BJ (cell line): ENCODE measurements at regions of chr16 and their contacts with region 1.

Region 1: GRCh38 chr16:85554112-85554813 is 58.9 kb upstream of the GSE1 start:
- DNase-seq: peak; percentile 37
- H3K4me3 ChIP-seq: peak overlapping the region; percentile 76
- H3K27me3 ChIP-seq: no peaks in the 10 kb centered on the region
- CTCF ChIP-seq: no peak

Region 2: GRCh38 chr16:85514595-85515318 is 39.5 kb before region 1 on chr16:
- CTCF ChIA-PET with region 1: interaction called, 12 read pairs
- POLR2A ChIA-PET with region 1: no interaction called
- DNase-seq: peak; percentile 78
- H3K4me3 ChIP-seq: 0 out of 2 replicates have a peak overlapping the region, but pooled peaks have one; percentile 11
- H3K27me3 ChIP-seq: no peaks in the 10 kb centered on the region
- CTCF ChIP-seq: peak; percentile 24; the same call in 1 of the 2 replicates